HCT116 (cell line): ENCODE measurements at regions of chr2 and their contacts with region 1.

Region 1: DNA sequence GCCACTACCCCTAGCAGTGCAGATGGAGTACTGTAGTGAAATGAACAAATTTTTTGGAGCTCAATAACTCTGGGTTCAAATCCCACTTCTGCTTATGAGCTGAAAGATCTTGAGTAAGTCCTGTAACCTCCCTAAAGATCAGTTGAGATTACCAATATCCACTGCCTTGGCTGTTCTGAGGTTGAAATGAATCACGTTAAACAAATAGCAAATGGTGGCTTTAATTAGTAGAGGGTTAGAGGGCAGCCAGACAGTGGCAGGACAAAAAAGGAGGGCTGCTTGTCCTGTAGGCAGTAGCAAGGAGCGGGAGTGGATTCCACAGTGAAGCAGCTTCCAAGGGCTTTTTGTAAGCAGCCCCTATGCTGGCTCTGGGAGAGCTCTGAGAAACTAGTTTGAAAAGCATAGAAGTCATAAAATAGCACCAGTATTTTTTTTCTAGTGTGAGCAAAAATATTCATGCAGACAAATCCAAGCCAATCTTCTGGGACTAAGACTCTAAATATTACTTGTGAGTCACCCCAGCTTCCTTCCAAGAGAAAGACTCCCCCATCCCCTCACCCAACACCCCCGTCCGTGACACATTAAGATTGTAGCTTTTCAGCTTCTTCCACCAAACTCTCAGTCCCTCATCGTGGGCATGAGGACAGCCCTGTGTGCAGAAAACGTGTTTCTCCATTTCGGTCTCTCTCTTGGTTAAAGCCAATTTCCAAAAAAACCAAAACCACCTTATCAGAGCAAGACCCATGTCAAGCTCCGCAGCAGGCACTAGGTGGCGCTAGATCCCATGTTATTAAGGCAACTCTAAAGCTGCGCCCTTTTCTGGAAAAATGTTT is 123.5 kb upstream of the LGALSL start:
- DNase-seq: peak; percentile 73
- ATAC-seq: peak; percentile 90
- H3K4me3 ChIP-seq: no peak overlapping the region; a peak in 1 of 4 replicates
- H3K27ac ChIP-seq: no peak overlapping the region
- H3K4me1 ChIP-seq: peaks cover 0 to 7% of the 10 kb centered on the region in 2 experiments; a peak in 2 of 4 replicates
- H3K27me3 ChIP-seq: no peaks in the 10 kb centered on the region
- CTCF ChIP-seq: peak; percentile 86 to 95 (median 94)
- POLR2A ChIP-seq: no peak
- RAD21 ChIP-seq: peak; percentile 99

Region 2: GRCh38 chr2:64052468-64053241 is 277.8 kb before region 1 on chr2:
- CTCF ChIA-PET with region 1: interaction called, 88 read pairs
- POLR2A ChIA-PET with region 1: interaction called, 6 read pairs
- RAD21 ChIA-PET with region 1: interaction called, 13 to 19 read pairs
- intact Hi-C with region 1: loop called (anchors 1 kb)
- DNase-seq: no peak
- ATAC-seq: no peak
- H3K4me3 ChIP-seq: no peak overlapping the region
- H3K27ac ChIP-seq: no peak overlapping the region
- H3K4me1 ChIP-seq: peaks cover 0 to 6% of the 10 kb centered on the region in 2 experiments; a peak in 1 of 4 replicates
- H3K27me3 ChIP-seq: no peaks in the 10 kb centered on the region
- CTCF ChIP-seq: no peak
- POLR2A ChIP-seq: no peak
- RAD21 ChIP-seq: no peak

Region 3: GRCh38 chr2:64128943-64129391 is 201.5 kb before region 1 on chr2:
- CTCF ChIA-PET with region 1: no interaction called
- POLR2A ChIA-PET with region 1: no interaction called
- RAD21 ChIA-PET with region 1: no interaction called
- intact Hi-C with region 1: no loop called
- DNase-seq: no peak
- ATAC-seq: no peak
- H3K4me3 ChIP-seq: no peak overlapping the region
- H3K27ac ChIP-seq: no peak overlapping the region
- H3K4me1 ChIP-seq: peaks cover 0 to 4% of the 10 kb centered on the region in 2 experiments; a peak in 2 of 4 replicates
- H3K27me3 ChIP-seq: no peaks in the 10 kb centered on the region
- CTCF ChIP-seq: no peak
- POLR2A ChIP-seq: no peak
- RAD21 ChIP-seq: no peak

Region 4: GRCh38 chr2:64454386-64455332 is 124.2 kb after region 1 on chr2:
- CTCF ChIA-PET with region 1: no interaction called
- POLR2A ChIA-PET with region 1: no interaction called
- RAD21 ChIA-PET with region 1: no interaction called
- intact Hi-C with region 1: no loop called
- DNase-seq: no peak
- ATAC-seq: peak; percentile 59
- H3K4me3 ChIP-seq: peak overlapping the region; percentile 74 to 82
- H3K27ac ChIP-seq: peak overlapping the region; percentile 83
- H3K4me1 ChIP-seq: peaks cover 17 to 27% of the 10 kb centered on the region in 2 experiments
- H3K27me3 ChIP-seq: no peaks in the 10 kb centered on the region
- CTCF ChIP-seq: no peak
- POLR2A ChIP-seq: no peak
- RAD21 ChIP-seq: no peak

Region 5: DNA sequence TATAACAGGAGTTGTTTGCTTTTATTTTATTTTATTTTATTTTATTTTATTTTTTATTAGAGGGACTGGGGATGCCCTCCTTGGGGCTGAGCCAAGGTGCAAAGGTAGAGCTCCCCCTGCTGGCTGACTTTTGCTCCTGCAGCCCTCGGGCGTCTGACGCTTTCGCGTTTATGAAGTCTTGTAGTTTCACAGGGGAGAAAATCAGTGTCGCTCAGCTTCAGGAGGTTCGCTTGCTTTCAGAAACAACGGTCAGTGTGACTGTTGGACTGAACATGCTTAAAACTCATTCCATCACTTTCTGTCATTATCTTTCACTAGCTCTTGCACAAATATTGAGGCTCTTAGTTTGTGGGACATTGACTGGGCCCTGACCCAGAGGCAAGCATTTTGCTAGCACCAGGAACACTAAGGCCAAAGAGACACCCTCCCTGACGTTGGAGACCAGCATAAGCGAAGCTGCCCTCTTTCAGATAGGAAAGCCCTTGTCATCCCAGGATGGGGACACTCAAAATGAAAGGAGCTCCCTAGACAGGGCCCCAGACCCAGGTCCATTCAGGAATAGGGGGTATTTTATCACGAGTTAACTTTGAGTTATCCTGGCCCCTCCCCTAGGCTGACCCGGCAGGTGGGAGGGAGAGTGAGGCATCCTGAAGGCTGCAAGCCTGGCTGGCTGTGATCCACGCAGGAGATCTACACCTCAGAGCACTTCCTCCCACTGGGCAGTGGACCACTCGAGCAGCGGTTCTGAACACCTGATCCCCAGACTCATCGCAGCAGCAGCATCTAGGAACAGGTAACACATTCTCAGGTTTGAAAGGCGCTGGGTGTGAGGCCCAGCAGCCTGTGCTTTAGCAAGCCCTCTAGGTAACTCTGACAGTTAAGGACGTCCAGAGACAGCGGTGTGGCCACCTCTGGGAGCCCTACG is 157.8 kb after region 1 on chr2:
- CTCF ChIA-PET with region 1: interaction called, 24 read pairs
- POLR2A ChIA-PET with region 1: interaction called, 3 read pairs
- RAD21 ChIA-PET with region 1: interaction called, 6 to 9 read pairs
- intact Hi-C with region 1: loop called (anchors 1 kb)
- DNase-seq: peak; percentile 55
- ATAC-seq: peak; percentile 89
- H3K4me3 ChIP-seq: no peak overlapping the region
- H3K27ac ChIP-seq: no peak overlapping the region
- H3K4me1 ChIP-seq: peaks cover 0 to 4% of the 10 kb centered on the region in 2 experiments; a peak in 1 of 4 replicates
- H3K27me3 ChIP-seq: no peaks in the 10 kb centered on the region; the same call in 1 of the 2 replicates
- CTCF ChIP-seq: peak; percentile 81 to 91 (median 89)
- POLR2A ChIP-seq: no peak
- RAD21 ChIP-seq: peak; percentile 89

Region 6: DNA sequence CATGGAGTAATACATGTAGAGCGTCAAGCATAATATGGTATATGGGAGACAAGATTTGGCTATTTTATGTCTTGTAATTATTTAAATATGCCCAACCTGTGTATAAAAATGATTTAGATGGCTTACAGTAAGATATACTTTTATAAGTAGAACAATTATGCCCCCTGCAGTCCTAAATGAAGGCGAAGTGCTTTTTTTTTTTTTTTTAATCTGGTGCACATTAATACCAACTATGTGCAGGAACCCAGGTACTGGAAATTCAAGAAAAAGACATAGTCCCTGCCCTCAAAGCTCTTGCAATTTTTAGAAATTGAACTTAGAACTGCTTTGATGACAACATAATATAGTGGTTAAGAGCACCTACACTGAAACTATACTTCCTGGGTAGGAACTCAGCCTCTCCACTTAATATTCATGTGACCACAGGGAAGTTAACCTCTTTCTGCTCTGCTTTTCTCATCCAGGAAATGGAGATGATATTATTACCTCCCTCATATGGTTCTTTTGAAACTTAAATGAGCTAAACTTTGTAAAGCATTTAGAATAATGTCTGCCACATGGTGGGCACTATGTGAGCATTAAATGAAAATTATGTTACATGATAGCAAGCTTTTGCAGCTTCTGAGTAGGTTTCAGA is 231.8 kb after region 1 on chr2:
- CTCF ChIA-PET with region 1: interaction called, 10 read pairs
- POLR2A ChIA-PET with region 1: no interaction called
- RAD21 ChIA-PET with region 1: no interaction called
- intact Hi-C with region 1: loop called (anchors 2 kb)
- DNase-seq: peak; percentile 10
- ATAC-seq: peak; percentile 46; the same call in 1 of the 2 replicates
- H3K4me3 ChIP-seq: no peak overlapping the region
- H3K27ac ChIP-seq: no peak overlapping the region
- H3K4me1 ChIP-seq: no peaks in the 10 kb centered on the region
- H3K27me3 ChIP-seq: no peaks in the 10 kb centered on the region
- CTCF ChIP-seq: peak; percentile 22 to 59 (median 39); a peak in 4 of 6 replicates
- POLR2A ChIP-seq: no peak
- RAD21 ChIP-seq: peak; percentile 60

Region 7: GRCh38 chr2:64873472-64873924 is 543.0 kb after region 1 on chr2:
- CTCF ChIA-PET with region 1: interaction called, 3 read pairs
- POLR2A ChIA-PET with region 1: no interaction called
- RAD21 ChIA-PET with region 1: no interaction called
- intact Hi-C with region 1: loop called (anchors 2 kb)
- DNase-seq: peak; percentile 51
- ATAC-seq: peak; percentile 92
- H3K4me3 ChIP-seq: no peak overlapping the region
- H3K27ac ChIP-seq: no peak overlapping the region
- H3K4me1 ChIP-seq: peaks cover 8 to 32% of the 10 kb centered on the region in 2 experiments
- H3K27me3 ChIP-seq: no peaks in the 10 kb centered on the region
- CTCF ChIP-seq: peak; percentile 74 to 92 (median 91)
- POLR2A ChIP-seq: no peak
- RAD21 ChIP-seq: peak; percentile 96

Region 8: DNA sequence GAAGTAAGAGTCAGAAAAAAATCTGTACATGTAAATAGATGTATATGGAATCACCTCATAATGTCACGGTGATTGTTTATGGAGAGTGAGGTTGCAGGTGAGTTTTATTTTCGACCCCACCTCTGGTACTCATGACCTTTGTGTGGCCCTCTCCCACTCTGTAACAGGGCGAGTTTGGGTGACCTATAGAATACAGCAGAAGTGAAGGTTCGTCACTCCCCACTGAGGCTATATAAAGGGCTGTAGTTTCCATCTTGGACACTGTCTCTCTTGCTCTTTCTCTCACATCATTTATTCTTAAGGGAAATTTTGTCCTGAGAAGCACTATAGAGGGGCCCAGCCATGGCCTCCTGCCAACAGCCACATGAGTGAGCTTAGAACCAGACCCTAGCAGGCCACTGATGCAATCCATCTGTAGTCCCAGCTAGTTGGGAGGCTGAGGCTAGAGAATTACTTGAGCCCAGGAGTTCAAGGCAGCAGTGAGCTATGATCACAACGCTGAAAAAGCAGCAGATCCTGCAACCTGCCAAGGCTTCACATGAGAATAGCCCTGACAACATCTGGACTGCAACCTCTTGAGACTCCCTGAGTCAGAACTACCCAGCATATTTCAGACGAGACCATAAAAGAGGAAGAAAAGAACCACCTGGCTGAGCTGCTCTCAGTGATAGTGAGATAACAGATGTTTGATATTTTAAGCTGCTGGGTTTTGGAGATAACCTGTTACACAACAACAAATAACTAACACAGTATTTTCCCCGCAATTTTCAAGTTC is 584.4 kb after region 1 on chr2:
- CTCF ChIA-PET with region 1: interaction called, 23 read pairs
- POLR2A ChIA-PET with region 1: no interaction called
- RAD21 ChIA-PET with region 1: interaction called in 1 of 2 experiments, 3 read pairs
- intact Hi-C with region 1: loop called (anchors 1 kb)
- DNase-seq: no peak
- ATAC-seq: no peak
- H3K4me3 ChIP-seq: no peak overlapping the region
- H3K27ac ChIP-seq: no peak overlapping the region
- H3K4me1 ChIP-seq: peaks cover 2 to 12% of the 10 kb centered on the region in 2 experiments; a peak in 1 of 4 replicates
- H3K27me3 ChIP-seq: no peaks in the 10 kb centered on the region
- CTCF ChIP-seq: no peak
- POLR2A ChIP-seq: no peak
- RAD21 ChIP-seq: no peak